Heart right ventricle (tissue), 16 donors: ENCODE measurements at regions of chr7 and their contacts with region 1.

Region 1: DNA sequence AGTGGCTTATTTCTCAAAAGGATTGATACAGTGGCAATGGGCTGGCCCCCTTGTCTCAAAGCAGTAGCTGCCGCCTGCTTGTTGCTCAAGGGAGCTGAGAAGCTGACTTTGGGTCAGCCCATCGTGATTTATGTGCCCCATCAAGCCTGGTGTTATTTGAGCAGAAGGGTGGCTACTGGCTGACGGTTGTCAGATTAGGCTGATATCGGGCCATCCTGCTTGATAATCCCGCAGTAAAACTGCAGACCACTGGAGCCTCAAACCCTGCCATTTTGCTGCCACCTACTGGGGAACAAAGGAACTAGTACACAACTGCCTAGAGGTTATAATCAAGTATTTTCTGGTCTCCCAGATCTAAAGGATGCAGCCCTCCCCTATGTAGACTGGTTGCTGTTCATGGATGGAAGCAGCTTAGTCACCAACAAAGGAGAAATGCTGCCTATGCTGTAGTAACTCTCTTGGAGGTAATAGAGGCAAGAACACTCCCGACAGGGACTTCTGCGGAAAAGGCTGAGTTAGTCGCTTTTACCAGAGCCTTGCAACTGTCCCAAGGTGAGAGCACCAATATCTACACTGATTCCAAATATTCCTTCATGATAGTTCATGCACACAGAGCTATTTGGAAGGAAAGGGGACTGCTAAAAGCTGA is 65.9 kb upstream of the ZNF92 start:
- DNase-seq: peak in 1 of 2 donors; percentile 28
- ATAC-seq: peak in 7 of 8 donors; percentile 51 to 72 (median 67)
- H3K4me3 ChIP-seq: no peak overlapping the region
- H3K27ac ChIP-seq: no peak overlapping the region
- H3K4me1 ChIP-seq: no peaks in the 10 kb centered on the region
- H3K27me3 ChIP-seq: peaks cover 0 to 21% (median 9%) of the 10 kb centered on the region in 7 donors
- CTCF ChIP-seq: peak; percentile 58 to 91 (median 83)

Region 2: DNA sequence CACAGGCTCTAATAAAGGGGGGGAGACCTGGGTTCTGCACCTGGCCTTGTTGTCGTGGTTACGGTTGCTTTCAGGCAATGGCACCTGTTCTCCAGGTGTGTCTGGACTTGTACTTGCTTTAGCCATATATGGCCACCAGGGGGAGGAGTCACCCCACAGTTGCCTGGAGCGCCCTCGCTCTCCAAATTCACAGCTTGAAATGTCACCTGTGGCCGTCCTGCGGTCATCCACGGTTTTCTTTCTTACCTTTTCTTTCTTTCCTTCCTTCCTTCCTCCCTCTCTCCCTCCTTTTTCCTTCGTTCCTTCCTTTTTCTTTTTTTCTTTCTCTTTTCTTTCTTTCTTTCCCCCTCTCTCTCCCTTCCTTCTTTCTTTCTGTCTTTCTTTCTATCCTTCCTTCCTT is 91.3 kb before region 1 on chr7:
- intact Hi-C with region 1: loop called in 2 of 10 experiments (anchors 5 kb)
- DNase-seq: peak in 1 of 2 donors; percentile 32
- ATAC-seq: peak in 1 of 8 donors; percentile 56
- H3K4me3 ChIP-seq: no peak overlapping the region
- H3K27ac ChIP-seq: no peak overlapping the region
- H3K4me1 ChIP-seq: no peaks in the 10 kb centered on the region
- H3K27me3 ChIP-seq: no peaks in the 10 kb centered on the region
- CTCF ChIP-seq: peak; percentile 24 to 69 (median 63)

Region 3: DNA sequence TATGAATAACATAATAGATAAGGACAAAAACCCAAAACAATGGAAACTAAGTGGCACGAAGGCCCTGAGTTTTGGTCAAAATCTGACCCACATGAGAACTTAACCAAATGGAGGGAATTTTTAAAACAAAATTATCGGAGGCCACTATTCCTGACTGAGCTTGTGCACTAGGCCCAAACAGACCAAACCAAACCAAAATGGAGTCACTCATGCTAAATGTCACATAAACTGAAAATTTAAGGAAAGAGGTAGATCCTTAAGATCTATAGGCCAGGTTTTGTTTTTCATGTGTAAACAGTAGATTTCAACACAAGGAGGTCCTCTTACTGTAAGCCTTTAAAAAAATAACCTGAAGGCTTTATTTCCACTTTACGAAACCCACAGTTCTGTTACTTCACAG is 62.1 kb after region 1 on chr7:
- intact Hi-C with region 1: loop called in 1 of 10 experiments (anchors 10 kb)
- DNase-seq: no peak
- ATAC-seq: no peak
- H3K4me3 ChIP-seq: no peak overlapping the region
- H3K27ac ChIP-seq: no peak overlapping the region
- H3K4me1 ChIP-seq: peaks cover 0 to 9% (median 5%) of the 10 kb centered on the region in 9 donors
- H3K27me3 ChIP-seq: no peaks in the 10 kb centered on the region
- CTCF ChIP-seq: no peak